ENCODE measurements at regions of chr1 and their contacts with region 1.

Region 1: GRCh38 chr1:169529068-169529696 is 43.4 kb upstream of the SLC19A2 start:
- H3K4me3 ChIP-seq: no peak overlapping the region
- H3K27ac ChIP-seq: no peak overlapping the region
- H3K4me1 ChIP-seq: no peaks in the 10 kb centered on the region
- CTCF ChIP-seq: no peak

Region 2: GRCh38 chr1:169485544-169486278 is 43.5 kb before region 1 on chr1 and contains the start of gene SLC19A2:
- CTCF ChIA-PET with region 1: no interaction called
- POLR2A ChIA-PET with region 1: interaction called, 11 read pairs
- H3K4me3 ChIP-seq: peak within 1 kb of the TSS; percentile 98
- H3K27ac ChIP-seq: peak within 1 kb of the TSS; percentile 76
- H3K4me1 ChIP-seq: peaks cover 12% of the 10 kb centered on the region
- CTCF ChIP-seq: peak; percentile 63